Endothelial cell of umbilical vein (primary cell): ENCODE measurements at regions of chr7 and their contacts with region 1.

Region 1: GRCh38 chr7:18345641-18346234 is 149.8 kb upstream of the HDAC9 start:
- DNase-seq: peak; percentile 72
- H3K4me3 ChIP-seq: no peak overlapping the region
- H3K27ac ChIP-seq: no peak overlapping the region
- H3K4me1 ChIP-seq: no peaks in the 10 kb centered on the region
- H3K27me3 ChIP-seq: no peaks in the 10 kb centered on the region
- CTCF ChIP-seq: peak; percentile 70 to 74
- POLR2A ChIP-seq: no peak

Region 2: GRCh38 chr7:17680943-17681351 is 664.8 kb before region 1 on chr7:
- CTCF ChIA-PET with region 1: interaction called, 34 read pairs
- POLR2A ChIA-PET with region 1: no interaction called
- dilution Hi-C with region 1: no loop called
- intact Hi-C with region 1: loop called (anchors 1 kb)
- DNase-seq: peak; percentile 31
- H3K4me3 ChIP-seq: no peak overlapping the region
- H3K27ac ChIP-seq: no peak overlapping the region
- H3K4me1 ChIP-seq: peaks cover 4% of the 10 kb centered on the region
- H3K27me3 ChIP-seq: no peaks in the 10 kb centered on the region
- CTCF ChIP-seq: peak in 1 of 2 donors; percentile 16
- POLR2A ChIP-seq: no peak

Region 3: GRCh38 chr7:18064242-18064838 is 281.4 kb before region 1 on chr7:
- CTCF ChIA-PET with region 1: no interaction called
- POLR2A ChIA-PET with region 1: no interaction called
- dilution Hi-C with region 1: no loop called
- intact Hi-C with region 1: loop called (anchors 1 kb)
- DNase-seq: peak; percentile 6
- H3K4me3 ChIP-seq: no peak overlapping the region
- H3K27ac ChIP-seq: no peak overlapping the region
- H3K4me1 ChIP-seq: no peaks in the 10 kb centered on the region
- H3K27me3 ChIP-seq: no peaks in the 10 kb centered on the region
- CTCF ChIP-seq: peak; percentile 43 to 49
- POLR2A ChIP-seq: no peak